AG04450 (cell line): ENCODE measurements at regions of chr1 and their contacts with region 1.

Region 1: DNA sequence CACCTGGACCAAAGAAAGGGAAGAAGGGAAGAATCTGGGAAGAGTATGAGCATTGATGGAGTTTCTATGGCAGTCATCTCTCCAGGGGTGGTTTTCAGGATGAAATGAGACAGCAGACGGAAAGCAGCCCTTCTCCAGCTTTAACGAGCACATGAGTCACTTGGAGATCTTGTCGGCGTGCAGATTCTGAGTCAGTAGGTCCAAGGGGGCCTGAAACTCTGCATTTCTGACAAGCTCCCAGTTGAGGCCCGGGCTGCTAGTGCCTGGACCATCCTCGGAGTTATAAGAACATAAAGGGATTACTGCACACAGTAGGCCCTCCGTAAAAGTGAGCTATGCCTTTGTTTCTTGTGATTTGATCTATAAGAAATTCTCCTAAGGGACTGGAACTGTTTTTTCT is 17.6 kb downstream of the HSPG2 start:
- DNase-seq: peak; percentile 39
- H3K4me3 ChIP-seq: no peak overlapping the region
- H3K27ac ChIP-seq: peak overlapping the region; percentile 73
- H3K27me3 ChIP-seq: no peaks in the 10 kb centered on the region
- CTCF ChIP-seq: no peak

Region 2: DNA sequence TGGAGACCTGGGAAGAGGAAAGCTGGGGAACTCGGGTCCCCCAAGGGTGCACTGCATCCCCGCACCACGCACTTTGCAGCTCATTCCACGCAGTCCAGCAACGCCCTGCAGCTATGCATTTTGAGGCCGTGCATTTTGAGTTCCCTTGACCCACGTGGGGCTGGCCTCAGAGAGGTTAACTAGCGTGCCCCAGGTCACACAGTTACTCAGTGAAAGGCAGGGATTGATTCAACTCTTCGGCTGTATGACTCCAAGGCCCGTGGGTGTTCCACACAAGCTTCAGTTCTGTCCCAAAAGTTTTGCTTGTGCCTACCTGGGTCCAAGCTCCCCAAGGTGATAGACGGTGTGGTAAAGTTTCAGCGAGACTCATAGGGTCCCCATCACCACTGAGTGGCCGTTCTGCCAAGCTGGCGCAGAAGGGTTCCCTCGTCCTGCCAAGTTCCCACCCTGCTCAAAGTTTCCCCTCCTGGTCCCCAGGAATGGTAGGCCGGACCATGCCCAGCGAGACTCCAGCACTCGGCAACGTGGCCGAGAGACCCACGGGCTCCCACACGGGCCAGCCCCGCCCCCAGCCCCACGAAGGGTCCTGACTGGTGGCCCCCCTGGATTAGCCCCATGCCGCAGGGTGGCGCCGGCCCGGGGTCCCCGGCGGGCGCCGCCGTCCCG is 17.0 kb after region 1 on chr1:
- CTCF ChIA-PET with region 1: interaction called, 5 read pairs
- POLR2A ChIA-PET with region 1: interaction called, 13 read pairs
- DNase-seq: no peak
- H3K4me3 ChIP-seq: peak overlapping the region; percentile 86
- H3K27ac ChIP-seq: no peak overlapping the region
- H3K27me3 ChIP-seq: no peaks in the 10 kb centered on the region
- CTCF ChIP-seq: no peak